Right cardiac atrium (tissue), 5 donors: ENCODE measurements at regions of chr9 and their contacts with region 1.

Region 1: GRCh38 chr9:132507746-132508469 is 74.5 kb upstream of the BARHL1 start:
- DNase-seq: peak in 2 of 3 donors; percentile 48 to 84
- ATAC-seq: peak; percentile 46 to 65
- H3K4me3 ChIP-seq: no peak overlapping the region
- H3K27ac ChIP-seq: no peak overlapping the region
- H3K4me1 ChIP-seq: no peaks in the 10 kb centered on the region
- H3K27me3 ChIP-seq: no peaks in the 10 kb centered on the region

Region 2: DNA sequence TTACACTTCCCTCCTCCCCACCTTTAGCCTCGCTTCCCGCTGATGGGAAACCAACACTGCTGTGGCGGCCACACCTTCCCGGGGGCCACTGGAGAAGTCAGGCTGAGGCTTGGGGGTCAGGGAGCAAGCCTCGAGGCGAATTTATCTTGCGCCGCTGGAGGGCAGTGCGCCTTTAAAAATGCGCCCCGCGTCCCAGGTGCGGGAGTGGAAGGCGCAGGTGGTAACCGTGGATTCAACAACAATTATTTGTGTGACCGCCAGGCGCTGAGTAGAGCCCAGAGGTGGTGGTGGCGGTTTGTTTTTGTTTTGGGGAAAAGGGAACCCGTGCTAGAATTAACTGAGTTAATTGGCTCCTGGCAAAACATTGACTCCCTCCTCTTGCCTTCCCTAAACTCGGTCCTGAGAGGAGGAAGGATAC is 96.8 kb before region 1 on chr9:
- intact Hi-C with region 1: loop called in 1 of 4 experiments (anchors 10 kb)
- DNase-seq: peak; percentile 28 to 72 (median 72)
- ATAC-seq: peak; percentile 4 to 32
- H3K4me3 ChIP-seq: peak overlapping the region; percentile 89
- H3K27ac ChIP-seq: no peak overlapping the region
- H3K4me1 ChIP-seq: peaks cover 9% of the 10 kb centered on the region
- H3K27me3 ChIP-seq: no peaks in the 10 kb centered on the region

Region 3: DNA sequence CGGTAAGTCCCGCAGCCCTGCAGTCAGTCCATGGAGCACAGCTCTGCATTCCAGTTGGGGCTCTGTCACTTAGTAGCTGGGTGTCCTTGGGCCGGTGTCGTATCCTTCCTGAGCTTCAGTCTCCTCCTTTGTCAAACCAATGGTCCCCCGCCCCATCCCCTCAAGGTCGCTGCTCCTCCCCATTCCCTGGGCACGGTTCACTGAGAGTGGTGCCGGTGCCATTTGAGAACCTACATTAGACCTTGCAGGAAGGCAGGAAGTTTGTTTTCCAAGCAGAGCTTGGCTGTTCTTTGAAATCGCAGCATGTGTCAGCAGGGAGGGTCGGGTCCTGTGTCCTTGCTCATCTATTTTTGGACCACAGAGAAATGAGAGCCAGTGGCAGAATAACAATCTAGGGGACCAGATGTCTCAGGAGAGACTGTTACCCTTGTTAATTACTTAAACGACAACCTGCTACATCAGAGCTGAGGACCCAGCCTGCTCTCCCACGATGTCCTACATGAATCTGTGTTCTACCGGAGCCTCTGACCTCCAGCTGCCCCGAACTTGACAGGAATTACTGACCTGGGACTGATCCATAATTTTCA is 52.8 kb after region 1 on chr9:
- intact Hi-C with region 1: loop called in 1 of 4 experiments (anchors 10 kb)
- DNase-seq: no peak
- ATAC-seq: peak; percentile 38 to 66
- H3K4me3 ChIP-seq: no peak overlapping the region
- H3K27ac ChIP-seq: no peak overlapping the region
- H3K4me1 ChIP-seq: no peaks in the 10 kb centered on the region
- H3K27me3 ChIP-seq: no peaks in the 10 kb centered on the region

Region 4: GRCh38 chr9:132575005-132575609 is 67.2 kb after region 1 on chr9:
- intact Hi-C with region 1: loop called in 3 of 4 experiments (anchors 2 to 5 kb)
- DNase-seq: peak; percentile 75 to 88 (median 87)
- ATAC-seq: peak; percentile 81 to 82
- H3K4me3 ChIP-seq: no peak overlapping the region
- H3K27ac ChIP-seq: no peak overlapping the region
- H3K4me1 ChIP-seq: no peaks in the 10 kb centered on the region
- H3K27me3 ChIP-seq: no peaks in the 10 kb centered on the region

Region 5: DNA sequence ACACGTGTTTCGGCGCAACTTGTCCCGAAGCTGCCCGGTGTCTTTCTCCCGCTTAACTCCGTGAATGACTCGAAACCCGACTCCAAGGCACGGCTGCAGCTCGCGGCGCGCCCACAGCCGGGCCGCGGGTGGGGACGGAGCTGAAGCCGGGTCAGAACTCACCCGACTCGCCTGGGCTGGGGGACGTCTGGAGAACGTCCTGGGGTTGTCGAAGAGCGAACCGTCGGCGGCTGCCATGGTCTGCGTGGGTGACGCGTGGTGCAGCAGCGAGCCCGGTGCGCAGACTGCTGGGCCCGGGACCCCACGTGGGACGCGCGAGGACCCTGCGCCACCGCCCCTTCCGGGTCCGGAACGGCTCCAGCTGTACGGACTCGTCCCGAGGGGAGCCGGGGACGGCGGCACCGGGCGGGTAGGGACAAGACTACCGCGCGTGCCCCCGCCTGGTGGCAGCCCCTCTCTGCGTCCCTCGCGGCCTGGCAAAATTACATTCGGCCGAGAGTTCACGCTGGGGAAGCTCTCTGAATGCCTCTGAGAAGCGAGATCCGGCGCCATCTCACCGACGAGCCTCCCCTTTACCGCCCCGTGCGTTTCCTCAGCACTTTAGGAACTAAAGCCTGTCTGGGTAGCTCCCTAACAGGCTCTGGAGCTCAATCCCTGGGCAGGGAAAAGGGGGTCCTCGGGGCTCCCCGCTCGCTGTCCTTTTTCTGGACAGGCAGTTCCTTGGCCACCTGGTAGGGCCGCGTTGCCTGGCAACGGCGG is 162.0 kb after region 1 on chr9 and contains the start of gene DDX31:
- intact Hi-C with region 1: no loop called
- DNase-seq: peak; percentile 90 to 96 (median 95)
- ATAC-seq: peak; percentile 98 to 99
- H3K4me3 ChIP-seq: peak within 1 kb of the TSS; percentile 78
- H3K27ac ChIP-seq: peak within 1 kb of the TSS; percentile 90
- H3K4me1 ChIP-seq: no peaks in the 10 kb centered on the region
- H3K27me3 ChIP-seq: no peaks in the 10 kb centered on the region
- total RNA-seq, gene DDX31: 3.7 to 7.4 (median 5.2) TPM

Region 6: GRCh38 chr9:132800038-132800648 is 292.2 kb after region 1 on chr9:
- intact Hi-C with region 1: loop called in 3 of 4 experiments (anchors 2 to 5 kb)
- DNase-seq: peak; percentile 61 to 95 (median 88)
- ATAC-seq: peak; percentile 52 to 69
- H3K4me3 ChIP-seq: no peak overlapping the region
- H3K27ac ChIP-seq: no peak overlapping the region
- H3K4me1 ChIP-seq: peaks cover 9% of the 10 kb centered on the region
- H3K27me3 ChIP-seq: no peaks in the 10 kb centered on the region